T-cell (primary cell): ENCODE measurements at regions of chr1 and their contacts with region 1.

Region 1: DNA sequence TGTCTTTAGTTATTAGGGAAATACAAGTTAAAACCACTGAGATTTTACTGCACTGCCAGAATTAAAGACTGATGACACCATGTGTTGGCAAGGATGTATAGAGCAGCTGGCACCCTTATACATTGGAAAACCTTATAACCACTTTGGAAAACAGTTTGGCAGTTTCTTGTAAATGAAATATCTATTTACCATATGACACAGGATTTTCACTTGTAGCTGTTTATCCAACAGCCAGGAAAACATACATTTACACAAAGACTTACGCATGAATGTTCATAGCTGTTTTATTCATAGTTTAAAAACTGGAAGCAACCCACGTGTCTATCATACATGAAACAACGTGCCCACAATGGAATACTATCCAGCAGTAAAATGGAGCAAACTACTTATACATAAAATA is 45.3 kb downstream of the PRRC2C start:
- DNase-seq: no peak
- ATAC-seq: no peak
- H3K4me3 ChIP-seq: no peak overlapping the region
- H3K4me3 Mint-ChIP-seq: no peak overlapping the region
- H3K27ac ChIP-seq: no peak overlapping the region
- H3K27ac Mint-ChIP-seq: no peak overlapping the region
- H3K4me1 ChIP-seq: no peaks in the 10 kb centered on the region
- H3K4me1 Mint-ChIP-seq: peaks cover 6 to 24% (median 7%) of the 10 kb centered on the region in 3 donors
- H3K27me3 ChIP-seq: no peaks in the 10 kb centered on the region
- H3K27me3 Mint-ChIP-seq: no peaks in the 10 kb centered on the region

Region 2: DNA sequence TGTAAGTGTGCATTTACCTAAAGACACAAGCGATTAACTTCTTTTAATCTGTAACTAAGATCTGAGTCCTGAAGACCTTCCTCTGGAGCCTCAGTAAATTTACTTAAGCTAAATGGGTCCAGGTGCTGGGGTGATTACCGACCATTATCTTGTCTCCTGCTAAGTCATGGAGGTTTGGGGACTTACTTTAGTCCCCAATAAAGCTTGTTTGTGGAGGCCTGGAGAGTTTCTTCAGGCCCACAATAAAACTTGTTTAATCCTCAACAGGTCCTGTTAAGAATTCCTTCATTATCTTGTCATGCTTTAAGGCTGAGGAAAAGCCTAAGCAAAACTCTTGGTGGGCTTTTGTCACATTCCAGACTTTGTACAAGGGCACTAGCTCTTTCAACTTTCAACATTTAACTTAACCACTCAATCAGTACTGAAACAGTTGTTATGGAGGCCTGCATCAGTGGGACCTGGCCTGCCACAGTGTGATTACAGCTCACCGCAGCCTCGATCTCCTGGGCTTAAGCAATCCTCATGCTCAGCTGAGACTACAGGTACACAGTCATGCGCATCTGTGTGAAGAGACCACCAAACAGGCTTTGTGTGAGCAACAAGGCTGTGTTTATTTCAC is 132.7 kb before region 1 on chr1:
- CTCF ChIA-PET with region 1: no interaction called
- POLR2A ChIA-PET with region 1: no interaction called
- DNase-seq: no peak
- ATAC-seq: no peak
- H3K4me3 ChIP-seq: no peak overlapping the region
- H3K4me3 Mint-ChIP-seq: no peak overlapping the region
- H3K27ac ChIP-seq: no peak overlapping the region
- H3K27ac Mint-ChIP-seq: no peak overlapping the region
- H3K4me1 ChIP-seq: no peaks in the 10 kb centered on the region
- H3K4me1 Mint-ChIP-seq: no peaks in the 10 kb centered on the region
- H3K27me3 ChIP-seq: no peaks in the 10 kb centered on the region
- H3K27me3 Mint-ChIP-seq: peaks cover 6 to 21% of the 10 kb centered on the region in 2 donors

Region 3: GRCh38 chr1:171515299-171515698 is 15.4 kb before region 1 on chr1:
- CTCF ChIA-PET with region 1: interaction called in 1 of 2 experiments, 4 read pairs
- POLR2A ChIA-PET with region 1: interaction called in 1 of 2 experiments, 12 read pairs
- DNase-seq: no peak
- ATAC-seq: no peak
- H3K4me3 ChIP-seq: no peak overlapping the region
- H3K4me3 Mint-ChIP-seq: no peak overlapping the region
- H3K27ac ChIP-seq: no peak overlapping the region
- H3K27ac Mint-ChIP-seq: peak overlapping the region in 1 of 2 donors; percentile 23
- H3K4me1 ChIP-seq: peaks cover 0 to 11% of the 10 kb centered on the region in 2 experiments
- H3K4me1 Mint-ChIP-seq: peaks cover 45 to 51% (median 47%) of the 10 kb centered on the region in 3 donors
- H3K27me3 ChIP-seq: no peaks in the 10 kb centered on the region
- H3K27me3 Mint-ChIP-seq: no peaks in the 10 kb centered on the region